ENCODE measurements at regions of chr14 and their contacts with region 1.

Region 1: DNA sequence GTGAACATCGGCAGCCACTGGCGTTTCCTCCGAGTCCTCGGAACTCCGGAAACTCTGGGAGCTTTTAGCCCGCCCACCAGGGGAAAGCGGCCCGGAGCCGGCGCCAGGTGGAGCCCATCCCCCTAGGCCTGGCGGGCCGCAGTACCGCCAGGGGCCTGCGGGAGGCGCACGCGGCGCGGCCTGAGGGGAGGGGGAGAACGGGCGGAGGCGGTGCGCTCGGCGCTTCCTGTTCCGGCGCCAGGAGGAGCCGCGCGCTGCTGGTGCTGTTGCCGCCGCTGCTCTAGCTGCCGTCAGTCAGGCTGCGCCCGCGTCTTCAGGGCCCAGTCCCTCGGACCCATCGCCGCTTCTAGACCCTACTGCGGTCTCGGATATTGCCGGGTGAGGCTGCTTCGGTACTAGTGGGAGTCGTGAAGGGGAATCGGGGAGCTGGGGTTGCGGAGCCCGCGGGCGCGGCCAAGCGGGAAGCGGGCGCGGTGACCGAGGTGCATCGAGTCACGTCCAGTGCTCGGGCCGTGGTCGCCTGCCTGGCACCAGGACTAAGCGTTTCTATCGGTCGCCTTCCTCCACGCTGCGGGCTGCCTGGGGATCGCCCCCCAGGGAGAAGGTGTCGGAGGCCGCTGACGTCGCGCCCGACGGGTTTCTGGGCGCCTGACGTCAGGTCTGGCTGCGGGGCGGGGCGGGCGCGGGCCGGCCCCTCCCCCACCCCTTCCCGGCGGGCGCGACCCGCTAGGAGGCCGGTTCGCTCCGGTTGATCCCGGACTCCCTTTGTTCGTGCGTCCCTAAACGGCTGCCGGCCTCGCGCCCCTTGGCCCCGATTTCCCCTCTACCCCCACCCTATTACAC is at the start of gene MAPK1IP1L:
- DNase-seq: peak; percentile 83 to 94 (median 89)
- ATAC-seq: peak; percentile 94
- H3K4me3 ChIP-seq: peak within 1 kb of the TSS; percentile 99 to 100
- H3K4me3 Mint-ChIP-seq: peak within 1 kb of the TSS; percentile 88
- H3K27ac ChIP-seq: peak within 1 kb of the TSS; percentile 100
- H3K27ac Mint-ChIP-seq: peak within 1 kb of the TSS; percentile 94
- H3K4me1 ChIP-seq: peaks cover 27% of the 10 kb centered on the region
- H3K4me1 Mint-ChIP-seq: peaks cover 47% of the 10 kb centered on the region
- H3K27me3 ChIP-seq: no peaks in the 10 kb centered on the region
- H3K27me3 Mint-ChIP-seq: no peaks in the 10 kb centered on the region
- CTCF ChIP-seq: peak; percentile 100
- total RNA-seq, gene MAPK1IP1L: 207 to 212 TPM

Region 2: DNA sequence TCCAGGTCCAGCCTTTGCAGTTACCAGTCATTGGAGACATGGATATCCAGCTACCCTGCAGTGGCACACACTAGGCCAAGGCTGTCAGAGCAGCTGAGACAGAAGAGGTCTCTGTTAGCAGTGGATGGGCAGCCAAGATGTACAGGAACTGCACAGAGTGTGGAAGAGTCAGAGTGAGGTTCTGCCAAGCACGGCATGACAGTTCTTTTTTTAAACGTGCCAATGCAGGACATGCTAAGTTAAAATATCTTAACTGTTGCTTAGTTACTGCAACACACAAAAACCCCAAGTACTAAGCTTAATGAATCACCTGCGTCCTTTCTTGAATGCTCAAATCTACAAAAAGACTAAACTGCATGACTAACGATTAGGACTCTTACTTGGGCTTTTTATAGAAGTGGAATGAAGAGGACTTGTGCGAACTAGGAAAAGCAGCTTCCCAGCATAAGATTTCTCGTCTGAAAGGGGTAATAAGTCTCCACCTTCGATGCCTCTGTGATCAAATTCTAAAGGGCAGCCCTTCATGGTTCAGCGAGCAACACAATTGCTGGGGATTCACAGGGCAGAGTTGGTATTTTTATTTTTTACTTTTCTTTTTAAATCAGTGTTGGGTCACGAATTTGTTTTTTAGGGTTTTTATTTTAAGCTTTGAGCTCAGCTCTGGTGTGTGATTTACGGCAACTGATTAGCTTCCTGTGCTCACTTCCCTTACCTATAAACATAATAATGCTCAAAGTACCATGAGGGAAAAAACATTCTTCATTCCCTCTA is 20.4 kb after region 1 on chr14:
- CTCF ChIA-PET with region 1: interaction called, 7 read pairs
- POLR2A ChIA-PET with region 1: interaction called, 7 read pairs
- intact Hi-C with region 1: loop called in 1 of 2 experiments (anchors 2 kb)
- DNase-seq: peak in 4 of 9 experiments; percentile 24 to 65 (median 38)
- ATAC-seq: peak; percentile 85
- H3K4me3 ChIP-seq: no peak overlapping the region
- H3K4me3 Mint-ChIP-seq: peak overlapping the region; percentile 74
- H3K27ac ChIP-seq: peak overlapping the region in 1 of 2 experiments; percentile 42
- H3K27ac Mint-ChIP-seq: peak overlapping the region; percentile 84
- H3K4me1 ChIP-seq: peaks cover 15% of the 10 kb centered on the region
- H3K4me1 Mint-ChIP-seq: peaks cover 29% of the 10 kb centered on the region
- H3K27me3 ChIP-seq: no peaks in the 10 kb centered on the region
- H3K27me3 Mint-ChIP-seq: no peaks in the 10 kb centered on the region
- CTCF ChIP-seq: no peak

Region 3: DNA sequence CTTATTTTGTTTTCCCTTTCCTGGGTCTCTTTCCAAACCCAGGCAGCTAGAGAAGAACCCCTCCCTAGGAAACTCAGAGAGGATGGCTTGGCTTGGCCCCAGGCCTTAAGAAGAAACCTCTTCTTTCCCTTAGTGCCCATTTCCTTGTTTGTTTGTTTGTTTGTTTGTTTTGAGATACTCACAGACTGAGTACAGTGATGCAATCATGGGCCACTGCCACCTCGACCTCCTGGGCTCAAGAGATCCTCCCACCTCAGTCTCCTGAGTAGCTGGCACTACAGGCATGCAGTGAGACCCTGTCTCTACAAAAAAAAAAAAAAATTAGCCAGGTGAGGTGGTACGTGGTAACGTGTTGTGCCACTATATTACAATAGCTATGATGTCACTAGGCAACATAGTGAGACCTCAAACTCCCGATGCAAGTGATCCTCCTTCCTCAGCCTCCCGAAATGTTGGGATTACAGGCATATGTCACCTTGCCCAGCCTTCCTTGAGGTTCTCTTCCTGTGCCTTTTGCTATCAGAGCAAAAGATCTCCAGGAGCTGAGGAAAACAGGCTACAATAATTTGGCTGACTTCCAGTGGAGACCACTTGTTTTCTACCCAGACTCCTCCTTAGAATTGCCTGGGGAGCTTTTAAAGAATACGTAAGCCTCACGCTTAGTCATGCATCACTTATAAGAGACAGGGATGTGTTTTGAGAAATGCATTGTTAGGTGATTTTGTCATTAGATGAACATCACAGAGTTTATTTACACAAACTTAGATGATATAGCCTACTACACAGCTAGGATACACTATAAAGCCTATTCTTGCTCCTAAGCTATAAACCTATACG is 42.9 kb after region 1 on chr14:
- CTCF ChIA-PET with region 1: interaction called, 4 read pairs
- POLR2A ChIA-PET with region 1: interaction called, 4 read pairs
- intact Hi-C with region 1: loop called (anchors 1 to 2 kb)
- DNase-seq: no peak
- ATAC-seq: no peak
- H3K4me3 ChIP-seq: no peak overlapping the region
- H3K4me3 Mint-ChIP-seq: no peak overlapping the region
- H3K27ac ChIP-seq: no peak overlapping the region
- H3K27ac Mint-ChIP-seq: no peak overlapping the region
- H3K4me1 ChIP-seq: peaks cover 12% of the 10 kb centered on the region
- H3K4me1 Mint-ChIP-seq: peaks cover 16% of the 10 kb centered on the region
- H3K27me3 ChIP-seq: no peaks in the 10 kb centered on the region
- H3K27me3 Mint-ChIP-seq: no peaks in the 10 kb centered on the region
- CTCF ChIP-seq: no peak

Region 4: GRCh38 chr14:55354500-55354899 is 302.9 kb after region 1 on chr14:
- CTCF ChIA-PET with region 1: interaction called, 3 read pairs
- POLR2A ChIA-PET with region 1: no interaction called
- intact Hi-C with region 1: loop called in 1 of 2 experiments (anchors 10 kb)
- DNase-seq: peak; percentile 31 to 82 (median 57)
- ATAC-seq: peak; percentile 92
- H3K4me3 ChIP-seq: no peak overlapping the region
- H3K4me3 Mint-ChIP-seq: peak overlapping the region; percentile 72
- H3K27ac ChIP-seq: peak overlapping the region in 1 of 2 experiments; percentile 64
- H3K27ac Mint-ChIP-seq: peak overlapping the region; percentile 93
- H3K4me1 ChIP-seq: no peaks in the 10 kb centered on the region
- H3K4me1 Mint-ChIP-seq: peaks cover 15% of the 10 kb centered on the region
- H3K27me3 ChIP-seq: no peaks in the 10 kb centered on the region
- H3K27me3 Mint-ChIP-seq: no peaks in the 10 kb centered on the region
- CTCF ChIP-seq: peak; percentile 59

Region 5: GRCh38 chr14:56579345-56580220 is 1527.9 kb after region 1 on chr14 and contains the start of gene TMEM260:
- CTCF ChIA-PET with region 1: no interaction called
- POLR2A ChIA-PET with region 1: no interaction called
- intact Hi-C with region 1: loop called (anchors 5 to 10 kb)
- DNase-seq: peak; percentile 84 to 95 (median 91)
- ATAC-seq: peak; percentile 93
- H3K4me3 ChIP-seq: peak within 1 kb of the TSS; percentile 74 to 83
- H3K4me3 Mint-ChIP-seq: peak within 1 kb of the TSS; percentile 90
- H3K27ac ChIP-seq: peak within 1 kb of the TSS; percentile 72 to 75
- H3K27ac Mint-ChIP-seq: peak within 1 kb of the TSS; percentile 94
- H3K4me1 ChIP-seq: peaks cover 27% of the 10 kb centered on the region
- H3K4me1 Mint-ChIP-seq: peaks cover 40% of the 10 kb centered on the region
- H3K27me3 ChIP-seq: no peaks in the 10 kb centered on the region
- H3K27me3 Mint-ChIP-seq: peaks cover 2% of the 10 kb centered on the region
- CTCF ChIP-seq: peak; percentile 82
- total RNA-seq, gene TMEM260: 4.3 to 6.4 TPM